ENCODE measurements at regions of chr10 and their contacts with region 1.

Region 1: GRCh38 chr10:71771821-71772617 is 1.3 kb downstream of the VSIR start:
- DNase-seq: no peak
- H3K4me3 ChIP-seq: peak overlapping the region in 1 of 2 experiments; percentile 68; a peak in 1 of 4 replicates
- H3K27ac ChIP-seq: no peak overlapping the region; a peak in 1 of 4 replicates
- H3K4me1 ChIP-seq: peaks cover 22 to 26% of the 10 kb centered on the region in 2 experiments; a peak in 3 of 4 replicates
- H3K27me3 ChIP-seq: no peaks in the 10 kb centered on the region
- CTCF ChIP-seq: no peak
- EP300 ChIP-seq: no peak
- RAD21 ChIP-seq: no peak

Region 2: DNA sequence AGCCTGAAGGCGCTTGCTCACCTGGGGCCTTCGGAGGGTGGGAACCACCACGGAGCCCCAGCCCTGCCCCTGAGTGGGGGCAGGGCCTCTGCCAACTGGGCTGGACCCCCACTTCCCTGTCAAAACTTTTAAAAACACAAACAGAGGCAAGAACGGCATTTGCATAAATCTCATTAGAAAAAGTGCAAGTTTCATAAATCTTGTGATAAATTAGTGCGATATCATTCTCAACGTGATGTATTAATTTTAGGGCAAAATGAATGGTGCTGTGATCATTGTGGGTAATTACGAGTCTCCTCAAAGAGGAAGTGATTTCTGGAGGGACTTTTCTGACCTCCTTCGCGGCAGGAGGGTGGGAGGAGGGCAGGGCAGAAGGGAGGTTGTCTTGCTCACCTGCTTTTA is 277.0 kb before region 1 on chr10:
- CTCF ChIA-PET with region 1: no interaction called
- POLR2A ChIA-PET with region 1: no interaction called
- DNase-seq: no peak
- H3K4me3 ChIP-seq: no peak overlapping the region
- H3K27ac ChIP-seq: no peak overlapping the region
- H3K4me1 ChIP-seq: peaks cover 0 to 13% of the 10 kb centered on the region in 2 experiments; a peak in 2 of 4 replicates
- H3K27me3 ChIP-seq: no peaks in the 10 kb centered on the region; the same call in none of the 2 replicates
- CTCF ChIP-seq: no peak
- EP300 ChIP-seq: no peak
- RAD21 ChIP-seq: no peak

Region 3: GRCh38 chr10:71727738-71728737 is 44.0 kb before region 1 on chr10:
- CTCF ChIA-PET with region 1: interaction called, 24 read pairs
- POLR2A ChIA-PET with region 1: interaction called, 10 read pairs
- DNase-seq: peak; percentile 87
- H3K4me3 ChIP-seq: no peak overlapping the region
- H3K27ac ChIP-seq: peak overlapping the region in 1 of 2 experiments; percentile 91; a peak in 2 of 4 replicates
- H3K4me1 ChIP-seq: peaks cover 0 to 46% of the 10 kb centered on the region in 2 experiments; a peak in 1 of 4 replicates
- H3K27me3 ChIP-seq: no peaks in the 10 kb centered on the region; the same call in 1 of the 2 replicates
- CTCF ChIP-seq: no peak
- EP300 ChIP-seq: peak in 1 of 2 experiments; percentile 39; a peak in 1 of 4 replicates
- RAD21 ChIP-seq: no peak

Region 4: DNA sequence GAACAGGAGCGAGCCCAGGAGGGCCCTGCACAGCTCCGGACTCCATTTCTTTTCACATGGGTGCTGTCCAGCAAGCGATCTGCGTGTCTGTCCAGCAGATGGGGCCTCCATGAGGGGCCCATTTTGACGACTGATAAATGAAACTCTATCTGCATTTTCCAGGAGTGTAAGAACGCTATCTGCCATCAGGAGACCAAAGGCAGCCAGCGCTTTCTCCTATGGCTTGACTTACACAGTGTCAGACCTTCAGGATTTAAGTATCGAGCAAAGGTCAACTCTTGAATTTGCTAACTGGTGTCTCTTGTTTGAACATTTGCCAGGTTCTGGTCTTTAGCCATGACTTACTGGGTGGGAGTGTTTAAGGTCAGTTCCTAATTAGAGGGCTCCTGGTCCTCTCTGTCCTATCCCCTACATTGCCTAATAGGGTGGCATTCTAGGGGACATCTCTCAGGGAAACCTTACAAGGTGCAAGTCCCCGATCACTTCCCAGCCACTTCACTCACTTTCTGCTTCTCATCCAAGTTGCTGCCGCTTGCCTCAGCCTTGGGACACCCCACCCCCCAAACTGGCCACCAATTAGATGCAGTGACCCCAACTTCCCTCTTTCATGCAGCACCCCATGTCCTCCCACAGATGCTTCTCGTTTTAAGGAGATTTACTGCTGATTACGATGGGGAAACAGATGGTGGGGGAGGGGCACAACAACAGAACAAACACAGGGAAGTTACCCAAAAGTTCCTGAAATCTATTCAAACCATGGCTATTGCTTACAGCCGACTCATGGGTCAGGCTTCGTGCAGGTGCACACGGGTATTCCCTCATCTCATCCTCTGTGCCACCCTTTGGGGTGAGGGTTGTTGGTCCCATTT is 18.7 kb before region 1 on chr10:
- CTCF ChIA-PET with region 1: interaction called, 21 read pairs
- POLR2A ChIA-PET with region 1: interaction called, 4 read pairs
- DNase-seq: no peak
- H3K4me3 ChIP-seq: no peak overlapping the region
- H3K27ac ChIP-seq: no peak overlapping the region
- H3K4me1 ChIP-seq: peaks cover 0 to 24% of the 10 kb centered on the region in 2 experiments; a peak in 1 of 4 replicates
- H3K27me3 ChIP-seq: no peaks in the 10 kb centered on the region
- CTCF ChIP-seq: no peak
- EP300 ChIP-seq: no peak
- RAD21 ChIP-seq: no peak

Region 5: DNA sequence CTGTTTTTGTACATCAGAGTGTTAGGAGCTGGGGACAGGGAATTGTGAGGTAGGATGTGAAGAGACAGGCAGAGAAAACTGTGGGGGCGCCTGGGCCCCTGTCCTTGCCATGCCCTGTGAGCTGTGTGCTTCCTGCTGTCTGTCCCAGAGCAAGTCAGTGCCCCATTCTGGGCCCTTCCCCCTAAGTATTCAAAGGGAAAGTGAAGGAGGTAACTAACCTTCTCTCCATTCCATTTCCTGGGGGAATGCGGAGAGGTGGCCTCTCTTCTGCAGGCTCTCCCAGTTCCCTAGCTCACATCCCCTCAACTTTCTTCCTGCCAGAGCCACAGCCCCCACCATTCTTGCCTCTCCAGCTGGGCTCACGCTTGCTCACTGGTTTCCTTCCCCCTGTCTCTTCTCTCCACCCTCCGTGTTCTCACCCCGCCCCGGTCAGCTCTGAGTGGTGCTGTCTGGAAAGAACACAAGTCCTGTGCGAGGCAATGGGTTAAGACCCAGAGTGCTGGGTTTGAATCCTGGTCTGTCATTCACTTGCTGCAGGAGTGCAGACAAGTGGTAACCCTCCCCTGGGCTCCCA is 11.0 kb after region 1 on chr10:
- CTCF ChIA-PET with region 1: interaction called, 51 read pairs
- POLR2A ChIA-PET with region 1: no interaction called
- DNase-seq: no peak
- H3K4me3 ChIP-seq: no peak overlapping the region
- H3K27ac ChIP-seq: no peak overlapping the region
- H3K4me1 ChIP-seq: no peaks in the 10 kb centered on the region
- H3K27me3 ChIP-seq: no peaks in the 10 kb centered on the region; the same call in 1 of the 2 replicates
- CTCF ChIP-seq: no peak
- EP300 ChIP-seq: no peak
- RAD21 ChIP-seq: no peak